ENCODE measurements at regions of chr7 and their contacts with region 1.

Region 1: GRCh38 chr7:148110111-148110868 is 480.3 kb upstream of the C7orf33 start:
- DNase-seq: no peak
- ATAC-seq: peak in 1 of 4 donors; percentile 59
- H3K4me3 ChIP-seq: no peak overlapping the region
- H3K27ac ChIP-seq: no peak overlapping the region
- H3K4me1 ChIP-seq: no peaks in the 10 kb centered on the region
- H3K27me3 ChIP-seq: peaks cover 0 to 13% (median 2%) of the 10 kb centered on the region in 9 donors
- CTCF ChIP-seq: peak in 4 of 12 donors; percentile 8 to 26 (median 10)
- POLR2A ChIP-seq: no peak

Region 2: DNA sequence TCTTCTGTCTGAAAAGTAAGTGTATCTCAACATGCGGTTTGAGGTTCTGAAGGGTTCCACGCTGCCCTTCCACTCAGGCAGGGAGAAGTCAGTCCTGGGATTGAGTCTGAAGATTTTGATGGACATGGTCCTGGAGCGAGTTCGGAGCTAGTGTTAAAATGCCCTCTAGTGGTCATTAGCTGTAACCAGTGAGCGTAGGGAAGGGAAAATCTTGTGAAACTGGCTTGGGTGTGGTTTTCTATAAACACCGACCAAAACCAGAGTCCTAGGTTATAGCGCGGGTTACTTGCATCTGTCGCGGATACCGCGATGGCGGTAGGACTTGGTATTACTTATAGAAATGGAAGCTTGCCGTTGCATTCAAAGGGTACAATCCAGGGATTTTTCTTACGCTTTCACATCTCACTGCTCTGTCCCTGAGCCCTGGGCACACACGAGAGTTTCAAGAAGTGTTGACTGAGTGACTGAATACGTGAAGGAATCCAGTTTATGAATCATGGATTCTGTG is 132.1 kb after region 1 on chr7:
- intact Hi-C with region 1: loop called in 4 of 10 experiments (anchors 1 to 2 kb)
- DNase-seq: no peak
- ATAC-seq: peak; percentile 65 to 82 (median 74)
- H3K4me3 ChIP-seq: peak overlapping the region in 4 of 12 donors; percentile 3 to 32 (median 26)
- H3K27ac ChIP-seq: no peak overlapping the region
- H3K4me1 ChIP-seq: peaks cover 0 to 4% (median 0%) of the 10 kb centered on the region in 12 donors
- H3K27me3 ChIP-seq: peaks cover 0 to 49% (median 0%) of the 10 kb centered on the region in 9 donors
- CTCF ChIP-seq: peak; percentile 69 to 86 (median 78)
- POLR2A ChIP-seq: no peak

Measured in heart left ventricle (tissue), 16 donors.